ENCODE measurements at regions of chr2 and their contacts with region 1.

Region 1: DNA sequence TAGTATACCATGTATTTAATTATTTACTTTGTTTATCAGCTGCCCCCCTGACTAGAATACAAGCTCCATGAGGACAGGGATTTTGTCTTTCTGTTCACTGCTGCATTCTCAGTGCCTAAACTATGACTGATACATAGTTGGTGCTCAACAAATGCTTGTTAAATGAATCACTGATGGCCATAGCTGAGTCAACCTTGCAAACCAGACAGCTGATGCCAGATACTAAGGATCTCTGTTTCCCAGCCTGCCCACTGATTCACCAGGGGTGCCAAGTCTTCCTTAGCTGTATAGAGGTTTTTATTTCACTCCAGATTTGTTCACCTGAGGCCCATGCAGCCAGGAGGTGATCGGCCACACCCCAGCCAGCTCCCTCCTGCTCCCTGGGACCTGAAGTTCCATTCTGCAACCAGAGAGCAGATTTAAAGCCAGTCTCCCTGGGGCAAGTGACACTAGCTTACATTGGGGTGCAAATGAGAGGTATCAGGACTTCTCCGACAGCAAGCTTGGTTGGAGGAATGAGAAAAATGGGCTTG is 92.2 kb downstream of the C1QL2 start:
- DNase-seq: no peak
- H3K4me3 ChIP-seq: no peak overlapping the region
- H3K27ac ChIP-seq: no peak overlapping the region
- H3K4me1 ChIP-seq: peaks cover 0 to 11% (median 7%) of the 10 kb centered on the region in 4 experiments; a peak in 6 of 7 replicates
- H3K27me3 ChIP-seq: no peaks in the 10 kb centered on the region
- CTCF ChIP-seq: no peak
- EP300 ChIP-seq: no peak
- POLR2A ChIP-seq: no peak
- RAD21 ChIP-seq: no peak

Region 2: GRCh38 chr2:119076713-119077112 is 10.4 kb after region 1 on chr2:
- CTCF ChIA-PET with region 1: interaction called, 11 read pairs
- POLR2A ChIA-PET with region 1: no interaction called
- DNase-seq: no peak
- H3K4me3 ChIP-seq: no peak overlapping the region
- H3K27ac ChIP-seq: no peak overlapping the region
- H3K4me1 ChIP-seq: no peaks in the 10 kb centered on the region
- H3K27me3 ChIP-seq: peaks cover 0 to 2% (median 0%) of the 10 kb centered on the region in 4 experiments; a peak in 2 of 7 replicates
- CTCF ChIP-seq: no peak
- EP300 ChIP-seq: no peak
- POLR2A ChIP-seq: no peak
- RAD21 ChIP-seq: no peak